CD4-positive, alpha-beta memory T cell (primary cell): ENCODE measurements at regions of chr5 and their contacts with region 1.

Region 1: DNA sequence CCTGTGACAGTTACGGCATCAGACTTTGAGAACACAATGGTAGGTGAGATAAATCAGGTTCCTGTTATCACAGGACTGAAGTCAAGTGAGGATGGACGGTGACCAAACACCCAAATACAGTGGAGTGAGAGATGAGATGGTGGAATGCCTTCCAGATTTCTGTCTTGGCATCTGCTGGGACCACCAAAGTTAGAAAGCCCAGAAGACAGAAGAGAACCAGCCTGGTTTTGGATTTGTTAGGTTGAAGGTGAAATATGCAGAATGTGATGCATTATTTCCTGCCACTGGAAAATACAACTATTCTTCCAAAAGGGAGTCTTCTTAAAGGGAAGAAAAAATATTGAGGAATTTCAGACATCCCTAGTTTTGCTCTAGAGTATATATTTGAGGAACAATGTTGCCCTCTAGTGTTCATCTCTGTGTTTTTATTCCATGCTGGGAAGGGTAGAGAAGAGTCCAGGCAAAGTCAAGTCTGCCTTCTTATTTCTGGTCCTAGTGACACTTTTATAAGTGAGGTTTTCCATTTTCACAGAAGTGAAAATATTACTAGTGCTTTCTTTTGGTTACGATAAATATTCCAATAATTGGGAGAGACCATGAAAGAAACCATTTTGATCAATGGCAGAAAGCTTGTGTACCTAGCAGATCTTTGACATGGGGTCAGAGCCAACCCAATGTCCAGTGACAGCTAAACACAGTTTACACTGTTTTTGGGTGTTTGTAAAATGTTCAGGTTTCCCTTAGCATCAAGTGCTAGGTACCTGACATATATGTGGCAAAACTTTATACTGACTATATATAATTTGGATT is 142.3 kb upstream of the ANKH start:
- DNase-seq: peak in 4 of 5 donors; percentile 19 to 36 (median 28)
- H3K4me3 ChIP-seq: no peak overlapping the region
- H3K4me3 Mint-ChIP-seq: no peak overlapping the region
- H3K27ac ChIP-seq: no peak overlapping the region
- H3K27ac Mint-ChIP-seq: no peak overlapping the region
- H3K4me1 ChIP-seq: no peaks in the 10 kb centered on the region
- H3K4me1 Mint-ChIP-seq: no peaks in the 10 kb centered on the region
- H3K27me3 ChIP-seq: no peaks in the 10 kb centered on the region
- H3K27me3 Mint-ChIP-seq: peaks cover 0 to under 1% of the 10 kb centered on the region in 2 donors

Region 2: GRCh38 chr5:14351845-14352712 is 661.8 kb before region 1 on chr5:
- CTCF ChIA-PET with region 1: interaction called, 6 read pairs
- POLR2A ChIA-PET with region 1: no interaction called
- intact Hi-C with region 1: loop called (anchors 1 kb)
- DNase-seq: peak; percentile 46 to 58 (median 57)
- H3K4me3 ChIP-seq: no peak overlapping the region
- H3K4me3 Mint-ChIP-seq: no peak overlapping the region
- H3K27ac ChIP-seq: no peak overlapping the region
- H3K27ac Mint-ChIP-seq: no peak overlapping the region
- H3K4me1 ChIP-seq: no peaks in the 10 kb centered on the region
- H3K4me1 Mint-ChIP-seq: no peaks in the 10 kb centered on the region
- H3K27me3 ChIP-seq: no peaks in the 10 kb centered on the region
- H3K27me3 Mint-ChIP-seq: peaks cover 2% of the 10 kb centered on the region in 2 donors

Region 3: GRCh38 chr5:14364576-14365472 is 649.0 kb before region 1 on chr5:
- CTCF ChIA-PET with region 1: interaction called, 6 read pairs
- POLR2A ChIA-PET with region 1: no interaction called
- intact Hi-C with region 1: loop called (anchors 1 kb)
- DNase-seq: no peak
- H3K4me3 ChIP-seq: no peak overlapping the region
- H3K4me3 Mint-ChIP-seq: peak overlapping the region in 1 of 8 donors; percentile 5
- H3K27ac ChIP-seq: no peak overlapping the region
- H3K27ac Mint-ChIP-seq: peak overlapping the region in 4 of 7 donors; percentile 0 to 66 (median 48)
- H3K4me1 ChIP-seq: peaks cover 28% of the 10 kb centered on the region
- H3K4me1 Mint-ChIP-seq: peaks cover 13 to 33% (median 25%) of the 10 kb centered on the region in 4 donors
- H3K27me3 ChIP-seq: no peaks in the 10 kb centered on the region
- H3K27me3 Mint-ChIP-seq: peaks cover 2% of the 10 kb centered on the region in 2 donors

Region 4: GRCh38 chr5:14977058-14977685 is 36.7 kb before region 1 on chr5:
- CTCF ChIA-PET with region 1: no interaction called
- POLR2A ChIA-PET with region 1: no interaction called
- intact Hi-C with region 1: no loop called
- DNase-seq: no peak
- H3K4me3 ChIP-seq: no peak overlapping the region
- H3K4me3 Mint-ChIP-seq: no peak overlapping the region
- H3K27ac ChIP-seq: no peak overlapping the region
- H3K27ac Mint-ChIP-seq: no peak overlapping the region
- H3K4me1 ChIP-seq: no peaks in the 10 kb centered on the region
- H3K4me1 Mint-ChIP-seq: no peaks in the 10 kb centered on the region
- H3K27me3 ChIP-seq: no peaks in the 10 kb centered on the region
- H3K27me3 Mint-ChIP-seq: peaks cover 3 to 6% of the 10 kb centered on the region in 2 donors